B cell (primary cell): ENCODE measurements at regions of chr20 and their contacts with region 1.

Region 1: DNA sequence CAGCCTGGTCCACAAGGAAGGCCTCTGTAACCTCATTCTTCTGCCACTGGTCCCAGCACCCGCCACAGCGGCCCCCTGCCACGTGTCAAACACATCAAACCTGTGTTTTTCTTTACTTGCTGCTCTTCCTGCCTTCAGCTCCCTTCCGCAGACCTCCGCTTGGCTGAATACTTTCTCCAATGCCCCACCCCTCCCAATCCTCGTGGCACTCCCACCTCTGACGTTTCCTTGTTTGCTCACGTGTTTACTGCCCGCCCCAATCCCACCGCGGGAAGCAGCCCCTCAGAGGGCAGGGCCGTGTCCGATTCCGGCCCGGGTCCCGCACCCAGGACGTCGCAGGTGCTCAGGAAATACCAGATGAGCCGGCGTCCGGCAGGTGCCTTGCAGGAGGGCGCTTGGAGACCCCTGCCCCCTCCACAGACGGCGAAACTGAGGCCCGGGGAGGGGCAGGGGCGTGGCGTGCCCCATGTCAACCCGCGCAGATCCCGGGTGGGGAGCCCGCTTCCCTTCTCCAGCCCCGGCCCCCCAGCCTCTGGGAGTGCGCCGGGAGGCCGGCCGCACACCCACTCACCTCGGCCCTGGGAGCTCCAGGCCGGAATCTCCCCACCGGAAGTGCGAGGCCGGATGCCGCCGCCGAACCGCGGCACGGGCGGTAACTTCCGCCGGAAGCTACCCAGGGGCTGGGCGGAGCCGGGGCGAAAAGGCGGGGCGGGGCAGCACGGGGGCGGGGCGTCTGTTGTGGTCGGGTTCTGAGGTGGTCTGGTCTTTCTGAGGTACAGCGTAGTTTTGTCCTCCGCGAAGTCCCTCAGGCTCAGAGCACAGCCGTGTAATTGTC is 42.4 kb downstream of the ELMO2 start:
- DNase-seq: peak; percentile 91
- ATAC-seq: peak; percentile 84
- H3K4me3 ChIP-seq: peak overlapping the region; percentile 64 to 97 (median 95)
- H3K4me3 Mint-ChIP-seq: peak overlapping the region; percentile 91
- H3K27ac ChIP-seq: peak overlapping the region; percentile 98 to 100
- H3K27ac Mint-ChIP-seq: peak overlapping the region; percentile 83
- H3K4me1 ChIP-seq: peaks cover 38 to 48% of the 10 kb centered on the region in 2 donors
- H3K4me1 Mint-ChIP-seq: peaks cover 48% of the 10 kb centered on the region
- H3K27me3 ChIP-seq: no peaks in the 10 kb centered on the region
- H3K27me3 Mint-ChIP-seq: no peaks in the 10 kb centered on the region
- CTCF ChIP-seq: no peak

Region 2: DNA sequence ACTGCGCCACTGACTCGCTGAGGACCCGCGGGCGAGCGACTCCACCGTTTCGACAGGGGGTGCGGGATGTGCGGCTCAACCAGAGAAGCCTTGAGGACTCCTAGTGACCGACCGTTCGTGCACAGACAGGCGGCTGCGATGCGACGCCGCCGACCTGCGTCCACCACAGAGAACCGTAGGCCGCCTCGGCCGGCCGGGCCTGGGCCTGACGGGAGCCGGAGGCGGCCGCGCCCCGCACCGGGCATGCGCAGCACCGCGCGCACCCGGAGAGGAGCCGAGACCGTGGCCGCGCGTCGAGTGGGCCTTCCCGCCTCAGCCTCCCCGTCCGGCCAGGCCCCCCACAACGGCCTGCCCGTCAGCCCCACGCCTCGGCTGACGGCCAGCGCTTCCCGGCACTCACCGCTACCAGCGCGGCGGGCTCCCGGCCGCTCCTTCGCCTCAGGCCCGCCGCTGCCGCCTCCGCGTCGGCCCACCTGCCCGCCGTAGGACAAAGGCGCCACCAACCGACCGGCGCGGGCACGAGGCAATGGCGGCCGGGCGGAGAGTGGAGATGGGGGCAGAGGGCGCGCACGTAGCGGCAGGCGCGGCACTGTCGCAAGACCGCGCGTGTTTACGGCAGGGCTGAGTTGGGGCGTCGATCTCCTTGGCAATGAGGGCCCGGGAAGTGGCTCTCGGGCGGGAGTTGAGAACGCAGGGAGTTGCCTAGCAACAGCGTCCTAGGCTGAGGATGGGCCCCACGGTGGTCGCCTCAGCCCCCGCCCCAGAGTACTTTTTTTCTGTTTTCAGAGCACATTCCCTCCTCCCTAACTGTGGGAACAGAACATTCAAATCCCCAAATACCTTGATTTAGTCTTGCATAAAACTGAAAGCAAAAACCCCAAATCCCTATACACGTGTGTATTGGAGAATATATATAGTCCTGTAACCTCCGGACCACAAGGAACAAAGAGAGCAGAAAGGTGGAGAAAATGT is 274.3 kb before region 1 on chr20 and contains the start of gene NCOA5:
- CTCF ChIA-PET with region 1: no interaction called
- POLR2A ChIA-PET with region 1: no interaction called
- intact Hi-C with region 1: loop called (anchors 1 kb)
- DNase-seq: peak; percentile 97
- ATAC-seq: peak; percentile 92
- H3K4me3 ChIP-seq: peak within 1 kb of the TSS; percentile 71 to 86 (median 81)
- H3K4me3 Mint-ChIP-seq: peak within 1 kb of the TSS; percentile 93
- H3K27ac ChIP-seq: peak within 1 kb of the TSS; percentile 71 to 94
- H3K27ac Mint-ChIP-seq: peak within 1 kb of the TSS; percentile 90
- H3K4me1 ChIP-seq: peaks cover 21 to 38% of the 10 kb centered on the region in 2 donors
- H3K4me1 Mint-ChIP-seq: peaks cover 47% of the 10 kb centered on the region
- H3K27me3 ChIP-seq: no peaks in the 10 kb centered on the region
- H3K27me3 Mint-ChIP-seq: no peaks in the 10 kb centered on the region
- CTCF ChIP-seq: peak; percentile 32
- total RNA-seq, gene NCOA5: 41.6 and 44.1 TPM in 2 replicates

Region 3: DNA sequence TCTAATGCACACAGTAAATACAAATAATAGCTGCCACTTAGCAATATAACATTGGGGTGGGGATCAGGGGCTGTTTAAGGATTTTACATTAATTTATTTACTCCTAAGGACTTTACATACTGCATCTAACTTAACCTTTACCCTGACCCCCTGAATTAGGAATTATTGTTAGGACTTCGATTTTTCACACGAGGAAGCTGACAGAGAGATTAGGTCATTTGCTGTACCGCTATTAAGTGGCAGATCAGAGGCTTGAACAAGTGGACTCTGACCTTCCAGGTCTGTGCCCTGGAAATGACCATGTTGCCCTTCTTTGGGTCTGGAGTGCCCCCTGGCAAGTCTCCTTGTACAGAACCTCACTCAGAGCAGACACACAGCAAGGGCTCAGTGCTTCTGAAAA is 47.6 kb after region 1 on chr20:
- CTCF ChIA-PET with region 1: interaction called, 18 read pairs
- POLR2A ChIA-PET with region 1: interaction called, 7 read pairs
- intact Hi-C with region 1: loop called (anchors 1 kb)
- DNase-seq: no peak
- ATAC-seq: no peak
- H3K4me3 ChIP-seq: no peak overlapping the region
- H3K4me3 Mint-ChIP-seq: no peak overlapping the region
- H3K27ac ChIP-seq: no peak overlapping the region
- H3K27ac Mint-ChIP-seq: no peak overlapping the region
- H3K4me1 ChIP-seq: peaks cover 6 to 16% of the 10 kb centered on the region in 2 donors
- H3K4me1 Mint-ChIP-seq: peaks cover 18% of the 10 kb centered on the region
- H3K27me3 ChIP-seq: peaks cover 0 to 24% (median 11%) of the 10 kb centered on the region in 4 experiments
- H3K27me3 Mint-ChIP-seq: peaks cover 17% of the 10 kb centered on the region
- CTCF ChIP-seq: no peak

Region 4: DNA sequence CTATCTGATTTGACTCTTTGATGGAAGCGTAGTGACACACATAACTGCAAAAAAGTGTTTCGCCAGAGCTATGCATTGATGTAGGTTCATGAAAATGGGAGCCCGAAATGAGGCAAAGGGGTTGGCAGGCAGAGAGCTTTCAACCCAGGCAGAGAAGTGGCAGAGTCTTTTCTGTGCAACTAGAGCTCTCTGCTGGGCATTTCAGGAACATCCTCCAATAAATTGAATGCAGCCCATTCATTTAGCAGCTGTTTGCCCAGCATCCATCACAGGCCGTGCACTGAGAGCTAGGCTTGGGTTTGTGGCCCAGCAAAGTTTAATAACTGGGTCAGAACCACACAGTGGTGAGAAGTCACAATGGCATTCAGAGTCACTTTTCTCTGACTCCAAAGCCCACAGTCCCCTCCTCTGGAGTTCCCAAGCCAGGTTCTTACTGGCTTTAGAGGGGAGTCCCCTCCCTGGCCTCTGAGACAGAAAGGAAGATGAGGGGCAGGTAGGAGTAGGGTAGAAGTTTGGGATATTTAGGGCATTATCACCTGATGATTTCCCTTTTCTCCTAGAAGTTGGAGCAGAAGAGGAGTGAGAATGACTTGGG is 74.2 kb after region 1 on chr20:
- CTCF ChIA-PET with region 1: no interaction called
- POLR2A ChIA-PET with region 1: no interaction called
- intact Hi-C with region 1: no loop called
- DNase-seq: peak; percentile 24
- ATAC-seq: no peak
- H3K4me3 ChIP-seq: no peak overlapping the region
- H3K4me3 Mint-ChIP-seq: no peak overlapping the region
- H3K27ac ChIP-seq: no peak overlapping the region
- H3K27ac Mint-ChIP-seq: no peak overlapping the region
- H3K4me1 ChIP-seq: no peaks in the 10 kb centered on the region
- H3K4me1 Mint-ChIP-seq: no peaks in the 10 kb centered on the region
- H3K27me3 ChIP-seq: peaks cover 0 to 5% (median 1%) of the 10 kb centered on the region in 4 experiments
- H3K27me3 Mint-ChIP-seq: peaks cover 41% of the 10 kb centered on the region
- CTCF ChIP-seq: no peak

Region 5: DNA sequence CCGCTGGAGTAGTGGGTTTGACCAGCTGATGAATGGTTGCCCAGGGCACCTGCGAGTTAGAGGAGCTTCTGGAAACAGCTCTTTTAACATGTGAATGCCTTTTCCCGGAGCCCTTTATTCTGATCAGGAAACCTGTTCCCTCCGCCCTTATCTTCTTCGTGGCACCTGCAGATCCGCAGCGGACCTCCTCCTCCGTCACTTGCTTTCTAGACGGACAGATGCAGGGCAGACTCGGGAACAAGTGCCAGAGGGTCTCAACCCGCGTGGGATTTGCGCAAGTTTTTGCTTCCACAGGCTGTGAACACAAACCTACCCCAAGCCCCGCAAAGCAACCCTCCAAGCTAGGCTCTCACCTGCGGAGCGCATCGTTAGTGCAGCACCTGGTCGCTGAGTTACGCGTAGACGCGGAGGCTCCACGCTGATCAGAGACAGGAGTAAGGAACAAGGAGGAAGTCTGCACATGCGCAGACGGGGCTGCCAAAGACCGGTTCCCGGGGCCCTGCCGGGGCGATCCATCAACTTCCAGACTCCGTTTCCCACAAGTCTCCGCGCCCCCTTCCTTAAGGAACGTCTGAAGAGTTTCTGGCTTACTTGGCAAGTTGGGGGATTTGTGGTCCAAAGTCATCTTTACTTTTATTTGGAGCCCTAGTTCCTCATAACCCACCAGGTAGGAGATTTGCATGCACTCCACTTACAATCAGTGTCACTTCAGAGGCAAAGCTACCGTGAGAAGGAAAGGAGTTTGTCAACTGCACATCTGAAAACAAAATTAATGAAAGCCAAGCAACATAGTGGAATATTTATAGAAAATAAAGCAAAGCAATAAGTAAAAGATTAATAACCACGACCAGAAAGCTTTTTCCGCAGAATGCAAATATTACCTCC is 95.1 kb after region 1 on chr20:
- CTCF ChIA-PET with region 1: no interaction called
- POLR2A ChIA-PET with region 1: no interaction called
- intact Hi-C with region 1: no loop called
- DNase-seq: peak; percentile 11
- ATAC-seq: no peak
- H3K4me3 ChIP-seq: peak overlapping the region in 1 of 5 experiments; percentile 30
- H3K4me3 Mint-ChIP-seq: peak overlapping the region; percentile 32
- H3K27ac ChIP-seq: no peak overlapping the region
- H3K27ac Mint-ChIP-seq: no peak overlapping the region
- H3K4me1 ChIP-seq: peaks cover 6 to 8% of the 10 kb centered on the region in 2 donors
- H3K4me1 Mint-ChIP-seq: peaks cover 5% of the 10 kb centered on the region
- H3K27me3 ChIP-seq: peaks cover 0 to 21% (median 19%) of the 10 kb centered on the region in 4 experiments
- H3K27me3 Mint-ChIP-seq: peaks cover 50% of the 10 kb centered on the region
- CTCF ChIP-seq: no peak

Region 6: DNA sequence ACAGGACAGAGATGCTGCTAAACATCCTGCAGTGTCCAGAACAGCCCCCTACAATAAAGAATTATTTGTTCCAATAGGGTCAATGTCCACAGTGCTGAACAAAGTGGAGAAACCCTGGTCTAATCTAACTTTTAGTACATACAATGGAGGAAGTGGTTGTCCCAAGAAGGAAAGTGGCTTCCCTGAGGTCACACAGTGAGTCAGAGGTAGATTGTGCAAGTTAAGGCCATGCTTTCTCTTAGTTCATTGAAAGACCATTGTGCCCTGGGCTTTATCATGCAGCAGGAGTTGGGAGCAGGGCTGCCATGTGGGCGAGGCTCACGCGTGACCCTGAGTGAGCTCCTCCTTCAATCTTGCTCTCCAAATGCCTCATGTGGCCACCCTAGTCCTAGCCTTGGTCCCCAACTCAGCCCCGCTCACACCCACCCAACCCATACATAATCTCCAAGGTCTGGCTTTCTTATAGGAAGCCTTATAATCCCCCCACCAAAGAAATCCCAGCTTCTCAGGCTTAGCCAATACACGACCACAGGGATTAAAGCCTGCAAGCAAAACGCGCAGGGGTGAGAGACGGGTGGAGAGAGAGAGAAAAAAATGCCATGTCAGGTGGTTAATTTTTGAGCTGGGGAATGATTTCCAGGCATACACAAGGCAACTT is 267.3 kb after region 1 on chr20:
- CTCF ChIA-PET with region 1: no interaction called
- POLR2A ChIA-PET with region 1: no interaction called
- intact Hi-C with region 1: no loop called
- DNase-seq: no peak
- ATAC-seq: no peak
- H3K4me3 ChIP-seq: no peak overlapping the region
- H3K4me3 Mint-ChIP-seq: no peak overlapping the region
- H3K27ac ChIP-seq: no peak overlapping the region
- H3K27ac Mint-ChIP-seq: no peak overlapping the region
- H3K4me1 ChIP-seq: no peaks in the 10 kb centered on the region
- H3K4me1 Mint-ChIP-seq: no peaks in the 10 kb centered on the region
- H3K27me3 ChIP-seq: peaks cover 0 to 12% (median 4%) of the 10 kb centered on the region in 4 experiments
- H3K27me3 Mint-ChIP-seq: peaks cover 46% of the 10 kb centered on the region
- CTCF ChIP-seq: no peak